ENCODE measurements at regions of chr11 and their contacts with region 1.

Region 1: GRCh38 chr11:87421422-87421821 is 383.7 kb downstream of the TMEM135 start:
- DNase-seq: no peak
- ATAC-seq: peak; percentile 69
- H3K4me3 Mint-ChIP-seq: no peak overlapping the region
- H3K27ac Mint-ChIP-seq: no peak overlapping the region
- H3K4me1 Mint-ChIP-seq: no peaks in the 10 kb centered on the region
- H3K27me3 Mint-ChIP-seq: peaks cover 3% of the 10 kb centered on the region

Region 2: GRCh38 chr11:87352759-87353707 is 68.4 kb before region 1 on chr11:
- CTCF ChIA-PET with region 1: interaction called, 42 read pairs
- DNase-seq: peak; percentile 88
- ATAC-seq: peak; percentile 94
- H3K4me3 Mint-ChIP-seq: no peak overlapping the region
- H3K27ac Mint-ChIP-seq: no peak overlapping the region
- H3K4me1 Mint-ChIP-seq: peaks cover 17% of the 10 kb centered on the region
- H3K27me3 Mint-ChIP-seq: peaks cover 7% of the 10 kb centered on the region

Region 3: DNA sequence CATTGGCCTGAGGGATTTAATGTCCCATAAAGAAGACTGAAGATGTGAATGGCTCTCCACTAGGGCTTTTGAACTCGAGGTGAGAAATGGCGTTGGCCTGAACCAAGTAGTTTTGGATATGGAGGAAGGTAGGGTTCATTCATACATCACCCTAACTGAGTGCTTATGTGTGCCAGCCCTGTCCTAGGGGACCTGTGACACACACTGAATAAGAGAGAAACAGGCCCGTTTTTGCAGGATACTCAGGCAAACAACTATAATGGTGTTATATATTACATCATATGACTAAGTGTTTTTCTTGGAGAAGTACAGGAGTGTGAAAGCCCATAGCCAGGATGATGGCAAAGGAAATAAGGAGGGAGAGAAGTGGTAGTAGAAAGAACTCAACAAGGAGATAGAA is 15.6 kb before region 1 on chr11:
- CTCF ChIA-PET with region 1: interaction called, 11 read pairs
- DNase-seq: no peak
- ATAC-seq: no peak
- H3K4me3 Mint-ChIP-seq: no peak overlapping the region
- H3K27ac Mint-ChIP-seq: no peak overlapping the region
- H3K4me1 Mint-ChIP-seq: no peaks in the 10 kb centered on the region
- H3K27me3 Mint-ChIP-seq: peaks cover 2% of the 10 kb centered on the region

Region 4: GRCh38 chr11:87851234-87851633 is 429.8 kb after region 1 on chr11:
- CTCF ChIA-PET with region 1: no interaction called
- DNase-seq: no peak
- ATAC-seq: no peak
- H3K4me3 Mint-ChIP-seq: no peak overlapping the region
- H3K27ac Mint-ChIP-seq: no peak overlapping the region
- H3K4me1 Mint-ChIP-seq: no peaks in the 10 kb centered on the region
- H3K27me3 Mint-ChIP-seq: no peaks in the 10 kb centered on the region

Region 5: DNA sequence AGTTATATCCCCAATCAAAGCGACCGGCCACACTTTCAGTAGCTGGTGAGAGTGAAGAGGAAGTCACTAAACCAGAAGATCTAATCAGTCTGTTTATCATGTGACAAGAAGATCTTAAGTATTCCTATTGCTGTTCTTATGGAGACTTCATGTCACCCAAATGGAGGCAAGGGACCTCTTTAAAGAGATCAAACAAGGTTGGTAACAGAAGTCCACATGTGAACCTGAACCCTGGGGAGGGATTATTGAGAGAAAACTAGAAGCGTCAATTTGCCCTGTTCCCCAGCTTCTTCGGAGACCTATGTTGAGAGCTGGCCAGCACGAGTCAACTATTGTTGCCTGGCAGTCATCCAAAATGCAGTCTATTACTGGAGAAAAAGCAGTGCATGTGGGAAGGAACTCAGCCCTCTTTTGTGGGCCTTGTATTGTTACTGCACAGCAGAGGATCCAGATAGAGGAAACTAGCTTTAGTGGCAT is 993.0 kb after region 1 on chr11:
- CTCF ChIA-PET with region 1: no interaction called
- DNase-seq: peak; percentile 50
- ATAC-seq: peak; percentile 60
- H3K4me3 Mint-ChIP-seq: peak overlapping the region; percentile 47
- H3K27ac Mint-ChIP-seq: peak overlapping the region; percentile 84
- H3K4me1 Mint-ChIP-seq: peaks cover 64% of the 10 kb centered on the region
- H3K27me3 Mint-ChIP-seq: peaks cover 2% of the 10 kb centered on the region

Measured in activated CD8-positive, alpha-beta memory T cell treated with anti-CD3 and anti-CD28 coated beads, Interleukin-2, amount 10 ng/mL, durations not matched to agents 7 days and 5 days (primary cell).